OCI-LY7 (cell line): ENCODE measurements at regions of chr6 and their contacts with region 1.

Region 1: DNA sequence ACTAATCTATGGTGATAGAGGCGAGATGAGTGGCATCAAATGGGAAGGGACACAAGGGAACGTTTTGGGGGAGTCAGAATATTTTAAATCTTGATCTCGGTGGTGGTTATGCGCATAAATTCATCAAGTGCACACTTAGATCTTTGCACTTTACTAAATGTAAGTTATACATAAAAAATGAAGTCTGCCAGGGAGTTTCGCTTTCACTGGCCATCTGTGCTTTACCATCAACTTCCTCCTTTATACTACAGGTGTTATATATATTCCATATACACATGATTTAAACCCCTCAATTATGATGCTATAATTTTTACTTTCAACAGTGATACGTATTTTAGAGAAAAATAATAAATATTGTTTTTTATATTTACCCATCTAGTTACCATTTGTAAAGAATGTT is 97.6 kb upstream of the AKIRIN2 start:
- DNase-seq: peak; percentile 80
- H3K4me3 ChIP-seq: peak overlapping the region; percentile 66
- H3K27ac ChIP-seq: peak overlapping the region; percentile 91
- H3K4me1 ChIP-seq: peaks cover 94% of the 10 kb centered on the region
- CTCF ChIP-seq: no peak

Region 2: DNA sequence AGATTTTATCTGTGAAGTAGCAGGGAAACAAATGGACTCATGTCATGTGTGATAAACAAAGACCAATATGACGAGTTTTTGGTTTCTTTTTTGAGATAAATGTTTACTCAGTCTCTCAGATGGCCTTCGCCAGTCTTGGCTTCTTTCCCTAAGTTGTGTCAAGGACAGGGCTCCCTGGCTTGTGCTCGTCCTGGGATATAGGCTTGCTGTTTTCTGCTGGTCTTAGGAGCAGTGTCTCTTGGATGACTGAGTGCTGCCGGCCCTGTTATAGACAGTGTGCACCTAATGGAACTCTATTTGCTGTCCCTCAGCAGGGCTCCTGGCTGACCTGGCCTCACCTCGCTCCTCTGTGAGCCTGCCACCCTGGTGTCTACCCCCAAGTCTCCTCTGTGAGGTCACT is 1832.8 kb before region 1 on chr6:
- CTCF ChIA-PET with region 1: no interaction called
- POLR2A ChIA-PET with region 1: no interaction called
- intact Hi-C with region 1: no loop called
- DNase-seq: no peak
- H3K4me3 ChIP-seq: no peak overlapping the region
- H3K27ac ChIP-seq: no peak overlapping the region
- H3K4me1 ChIP-seq: no peaks in the 10 kb centered on the region
- CTCF ChIP-seq: no peak

Region 3: DNA sequence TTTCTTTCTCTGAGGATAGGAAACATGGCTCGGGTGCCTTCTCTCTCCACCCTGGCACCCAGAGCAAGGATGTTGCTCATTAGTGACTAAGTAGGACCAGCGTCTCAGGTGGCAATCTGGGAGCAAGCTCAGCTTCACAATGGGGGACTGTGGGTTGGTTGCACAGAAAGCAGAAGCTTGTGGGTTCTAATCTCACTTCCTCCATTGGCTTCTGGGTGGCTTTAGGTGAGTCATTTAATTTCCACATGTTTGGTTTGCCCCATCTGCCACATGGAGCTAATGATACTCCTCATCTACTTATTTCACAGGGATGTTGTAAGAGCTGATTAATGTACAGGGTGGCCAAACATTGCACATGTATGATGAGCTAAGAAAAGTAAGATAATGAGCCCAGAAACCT is 42.8 kb before region 1 on chr6:
- CTCF ChIA-PET with region 1: interaction called, 3 read pairs
- POLR2A ChIA-PET with region 1: interaction called, 19 read pairs
- intact Hi-C with region 1: loop called (anchors 1 kb)
- DNase-seq: peak; percentile 94
- H3K4me3 ChIP-seq: peak overlapping the region; percentile 23
- H3K27ac ChIP-seq: peak overlapping the region; percentile 78
- H3K4me1 ChIP-seq: peaks cover 49% of the 10 kb centered on the region
- CTCF ChIP-seq: no peak

Region 4: GRCh38 chr6:87817183-87817582 is 17.5 kb after region 1 on chr6:
- CTCF ChIA-PET with region 1: interaction called, 3 read pairs
- POLR2A ChIA-PET with region 1: interaction called, 30 read pairs
- intact Hi-C with region 1: no loop called
- DNase-seq: no peak
- H3K4me3 ChIP-seq: no peak overlapping the region
- H3K27ac ChIP-seq: no peak overlapping the region
- H3K4me1 ChIP-seq: no peaks in the 10 kb centered on the region
- CTCF ChIP-seq: no peak

Region 5: GRCh38 chr6:87879132-87879861 is 79.6 kb after region 1 on chr6:
- CTCF ChIA-PET with region 1: no interaction called
- POLR2A ChIA-PET with region 1: interaction called, 5 read pairs
- intact Hi-C with region 1: loop called (anchors 2 kb)
- DNase-seq: peak; percentile 100
- H3K4me3 ChIP-seq: peak overlapping the region; percentile 11
- H3K27ac ChIP-seq: peak overlapping the region; percentile 99
- H3K4me1 ChIP-seq: peaks cover 78% of the 10 kb centered on the region
- CTCF ChIP-seq: no peak

Region 6: GRCh38 chr6:87914637-87915395 is 115.2 kb after region 1 on chr6:
- CTCF ChIA-PET with region 1: no interaction called
- POLR2A ChIA-PET with region 1: interaction called, 11 read pairs
- intact Hi-C with region 1: no loop called
- DNase-seq: peak; percentile 58
- H3K4me3 ChIP-seq: no peak overlapping the region
- H3K27ac ChIP-seq: peak overlapping the region; percentile 99
- H3K4me1 ChIP-seq: peaks cover 95% of the 10 kb centered on the region
- CTCF ChIP-seq: no peak

Region 7: GRCh38 chr6:87968435-87969278 is 169.0 kb after region 1 on chr6:
- CTCF ChIA-PET with region 1: no interaction called
- POLR2A ChIA-PET with region 1: no interaction called
- intact Hi-C with region 1: no loop called
- DNase-seq: peak; percentile 58
- H3K4me3 ChIP-seq: peak overlapping the region; percentile 65
- H3K27ac ChIP-seq: no peak overlapping the region
- H3K4me1 ChIP-seq: peaks cover 13% of the 10 kb centered on the region
- CTCF ChIP-seq: peak; percentile 75

Region 8: DNA sequence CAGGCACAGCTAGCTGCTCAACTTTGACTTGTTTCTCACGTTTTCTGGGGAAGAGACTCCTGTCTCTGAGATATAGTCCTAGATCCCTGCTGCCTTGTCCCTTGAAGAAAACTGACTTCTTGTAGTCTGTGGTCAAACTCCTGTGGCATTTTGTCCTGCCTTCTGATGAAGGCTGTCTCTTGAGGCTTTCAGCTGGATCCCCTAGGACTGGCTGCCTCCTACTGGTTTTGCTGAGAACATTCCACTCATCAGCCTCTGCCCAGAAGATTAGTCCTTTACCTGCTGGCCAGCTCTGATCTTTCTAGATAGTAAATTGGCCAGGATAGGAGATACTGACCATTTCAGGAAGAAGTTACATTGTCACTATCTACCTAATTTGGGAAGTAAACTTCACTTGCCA is 438.4 kb after region 1 on chr6:
- CTCF ChIA-PET with region 1: no interaction called
- POLR2A ChIA-PET with region 1: no interaction called
- intact Hi-C with region 1: no loop called
- DNase-seq: peak; percentile 74
- H3K4me3 ChIP-seq: no peak overlapping the region
- H3K27ac ChIP-seq: no peak overlapping the region
- H3K4me1 ChIP-seq: peaks cover 17% of the 10 kb centered on the region
- CTCF ChIP-seq: peak; percentile 88